ENCODE measurements at regions of chr22 and their contacts with region 1.

Region 1: DNA sequence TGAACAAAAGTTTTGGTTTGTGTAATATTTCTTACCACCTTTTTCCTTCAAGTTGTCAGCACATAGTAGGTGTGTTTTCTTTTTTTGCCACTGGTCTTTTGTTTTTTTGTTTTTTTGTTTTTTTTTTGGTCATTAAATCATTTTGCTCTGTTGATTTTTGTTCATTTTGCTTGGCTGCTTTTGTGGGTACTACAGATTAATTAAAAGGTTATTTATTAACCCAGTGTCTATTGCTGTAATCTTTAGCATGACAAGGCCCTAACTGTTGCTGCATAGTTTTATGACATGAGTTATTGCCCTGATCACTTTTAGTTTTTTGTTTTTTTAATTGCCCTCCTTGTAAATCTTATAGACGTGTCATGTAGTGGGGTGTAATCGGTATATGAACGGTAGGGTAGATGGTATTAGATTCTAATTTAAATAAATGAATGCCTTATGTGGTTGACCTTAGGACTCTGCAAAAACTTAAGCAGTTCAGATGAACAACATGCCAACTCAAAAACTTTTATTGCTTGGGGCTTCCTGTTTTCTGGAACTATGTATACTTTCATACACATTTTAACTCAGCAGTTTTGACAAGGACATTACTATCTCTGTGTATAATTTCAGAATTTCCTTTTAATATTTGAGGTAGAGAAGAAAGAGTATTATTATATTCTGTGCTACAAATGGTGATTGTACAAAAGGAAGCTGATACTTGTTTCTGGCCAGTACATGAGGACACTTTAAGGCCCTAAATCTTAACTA is 7.9 kb downstream of the EWSR1 start:
- DNase-seq: no peak
- H3K4me3 ChIP-seq: no peak overlapping the region
- H3K27ac ChIP-seq: no peak overlapping the region
- H3K4me1 ChIP-seq: peaks cover 11% of the 10 kb centered on the region
- CTCF ChIP-seq: no peak

Region 2: DNA sequence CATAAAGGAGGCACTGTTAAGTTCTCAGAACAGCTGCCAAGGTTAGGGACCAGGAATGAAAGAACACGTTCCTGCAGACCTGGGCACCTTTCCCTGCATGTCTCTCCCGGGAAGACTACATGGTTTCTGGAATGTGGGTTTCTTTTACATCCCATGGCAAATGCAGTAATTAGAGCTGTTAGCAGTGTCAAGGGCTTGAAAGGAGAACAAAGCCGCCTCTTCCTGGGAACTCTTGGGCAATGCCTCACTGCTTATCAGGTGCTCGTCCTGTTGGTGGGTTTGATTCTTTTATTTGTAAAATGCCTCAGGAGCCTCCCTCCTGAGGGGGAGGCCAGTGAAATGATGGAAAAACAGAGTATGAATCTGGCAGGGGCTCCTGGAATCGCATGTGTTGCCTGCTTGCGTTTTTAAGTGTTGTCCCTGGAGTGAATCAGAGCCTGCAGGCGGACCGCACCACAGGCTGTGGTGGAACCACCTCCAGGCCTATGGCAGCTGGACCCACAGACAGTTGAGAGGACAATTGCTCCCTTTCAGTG is 213.6 kb before region 1 on chr22:
- CTCF ChIA-PET with region 1: no interaction called
- POLR2A ChIA-PET with region 1: no interaction called
- intact Hi-C with region 1: no loop called
- DNase-seq: no peak
- H3K4me3 ChIP-seq: no peak overlapping the region
- H3K27ac ChIP-seq: no peak overlapping the region
- H3K4me1 ChIP-seq: no peaks in the 10 kb centered on the region
- CTCF ChIP-seq: no peak

Region 3: DNA sequence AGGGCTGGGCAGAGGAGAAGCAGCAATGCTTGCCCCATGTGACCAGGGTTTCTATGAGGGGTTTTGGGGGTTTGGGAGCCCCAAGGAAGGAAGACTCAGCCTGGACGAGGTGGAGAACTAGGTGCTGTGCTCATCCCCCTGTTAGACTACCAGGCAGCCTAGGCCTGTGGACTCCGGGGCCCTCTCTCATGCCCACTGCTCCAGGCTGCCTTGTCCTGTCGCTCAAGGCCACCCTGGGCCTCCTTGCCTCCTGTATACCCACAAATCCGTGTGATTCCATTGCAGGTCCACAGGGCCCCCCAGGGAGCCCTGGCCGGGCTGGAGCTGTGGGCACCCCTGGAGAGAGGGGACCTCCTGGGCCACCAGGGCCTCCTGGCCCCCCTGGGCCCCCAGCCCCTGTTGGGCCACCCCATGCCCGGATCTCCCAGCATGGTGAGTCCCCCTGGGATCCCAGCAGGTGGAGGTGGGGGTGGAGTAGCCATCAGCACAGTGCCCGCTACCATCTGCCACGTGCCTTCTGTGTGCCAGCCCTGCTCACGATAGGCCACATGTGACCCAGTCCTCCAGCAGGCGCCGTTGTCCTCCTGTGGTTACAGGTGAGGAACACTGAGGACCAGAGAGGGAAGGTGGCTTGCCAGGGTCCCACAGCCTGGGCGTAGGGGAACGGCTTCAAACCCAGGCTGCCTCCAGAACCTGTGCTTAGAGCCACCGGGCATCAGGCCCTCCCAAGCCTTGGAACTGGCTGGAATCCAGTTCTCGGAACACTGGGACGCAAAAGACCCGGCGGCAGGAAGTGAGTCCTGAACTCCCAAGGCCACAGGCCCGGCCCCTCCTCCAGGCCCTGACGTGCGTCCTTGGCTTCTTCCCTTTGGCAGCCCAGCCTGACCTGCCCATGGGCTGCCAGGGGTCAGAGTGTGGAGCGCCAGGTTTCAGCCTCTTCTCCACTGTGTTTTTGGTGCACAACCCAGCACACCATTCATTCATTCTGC is 43.7 kb before region 1 on chr22:
- CTCF ChIA-PET with region 1: no interaction called
- POLR2A ChIA-PET with region 1: no interaction called
- intact Hi-C with region 1: no loop called
- DNase-seq: no peak
- H3K4me3 ChIP-seq: no peak overlapping the region
- H3K27ac ChIP-seq: no peak overlapping the region
- H3K4me1 ChIP-seq: no peaks in the 10 kb centered on the region
- CTCF ChIP-seq: no peak

Region 4: GRCh38 chr22:29288837-29289236 is 12.8 kb after region 1 on chr22:
- CTCF ChIA-PET with region 1: no interaction called
- POLR2A ChIA-PET with region 1: interaction called, 3 read pairs
- intact Hi-C with region 1: loop called (anchors 2 kb)
- DNase-seq: no peak
- H3K4me3 ChIP-seq: no peak overlapping the region
- H3K27ac ChIP-seq: no peak overlapping the region
- H3K4me1 ChIP-seq: no peaks in the 10 kb centered on the region
- CTCF ChIP-seq: no peak

Region 5: GRCh38 chr22:29470159-29470855 is 194.3 kb after region 1 on chr22:
- CTCF ChIA-PET with region 1: no interaction called
- POLR2A ChIA-PET with region 1: no interaction called
- intact Hi-C with region 1: no loop called
- DNase-seq: peak; percentile 81
- H3K4me3 ChIP-seq: peak overlapping the region; percentile 59
- H3K27ac ChIP-seq: no peak overlapping the region
- H3K4me1 ChIP-seq: peaks cover 8% of the 10 kb centered on the region
- CTCF ChIP-seq: peak; percentile 94

Measured in OCI-LY7 (cell line).